ENCODE measurements at regions of chr1 and their contacts with region 1.

Region 1: GRCh38 chr1:19096036-19096833 is 113.8 kb downstream of the UBR4 start:
- DNase-seq: peak; percentile 44
- ATAC-seq: peak; percentile 76 to 83

Region 2: DNA sequence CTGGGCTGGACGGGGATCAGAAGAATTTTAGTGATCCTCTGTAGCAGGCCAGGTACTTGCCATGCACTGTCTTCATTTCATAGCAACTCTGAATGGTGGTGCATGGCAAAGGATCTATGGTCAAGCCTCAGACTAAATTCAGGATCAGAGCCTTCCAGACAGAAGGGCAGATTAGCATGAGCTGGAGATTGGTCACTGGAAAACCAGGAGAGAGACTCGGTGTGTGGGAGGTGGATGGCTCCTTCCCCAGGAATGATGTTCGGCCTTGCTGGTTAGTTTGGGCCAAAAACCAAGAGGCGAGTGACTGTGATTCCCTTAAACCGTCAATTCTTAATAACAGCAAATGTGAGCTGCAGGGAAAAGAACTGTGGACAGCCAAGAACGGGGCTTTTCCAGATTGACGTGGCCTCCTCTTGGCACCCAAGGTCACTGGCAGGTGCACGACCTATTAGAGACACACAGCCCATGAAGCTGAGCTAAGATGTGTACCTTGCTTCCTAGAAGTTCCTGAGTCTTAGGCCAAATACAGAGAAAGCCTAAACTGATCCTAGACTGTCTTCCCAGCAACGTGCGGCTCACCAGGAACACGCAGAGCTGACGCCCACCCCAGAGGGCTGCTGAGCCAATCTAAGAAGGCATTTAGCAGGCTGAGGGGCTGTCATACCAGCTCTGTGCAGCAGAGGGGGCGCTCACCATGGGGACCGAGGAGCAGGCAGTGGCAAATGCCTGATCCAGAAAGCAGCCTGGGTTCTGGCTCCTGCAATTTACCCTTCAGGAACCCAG is 212.4 kb before region 1 on chr1:
- intact Hi-C with region 1: loop called in 1 of 2 experiments (anchors 5 kb)
- DNase-seq: peak; percentile 77
- ATAC-seq: peak; percentile 55 to 63

Region 3: GRCh38 chr1:18913065-18913835 is 183.0 kb before region 1 on chr1:
- intact Hi-C with region 1: loop called in 1 of 2 experiments (anchors 5 kb)
- DNase-seq: peak; percentile 86
- ATAC-seq: peak; percentile 85 to 86

Measured in left cardiac atrium (tissue), 4 donors.